ENCODE measurements at regions of chr5 and their contacts with region 1.

Region 1: GRCh38 chr5:79048437-79048836 is 21.0 kb downstream of the DMGDH start:
- DNase-seq: no peak
- H3K4me3 ChIP-seq: no peak overlapping the region
- H3K27ac ChIP-seq: peak overlapping the region in 1 of 2 experiments; percentile 51; a peak in 2 of 4 replicates
- H3K4me1 ChIP-seq: peaks cover 0 to 9% of the 10 kb centered on the region in 2 experiments; a peak in 2 of 4 replicates
- H3K27me3 ChIP-seq: no peaks in the 10 kb centered on the region; the same call in 1 of the 2 replicates
- CTCF ChIP-seq: no peak
- EP300 ChIP-seq: no peak
- RAD21 ChIP-seq: no peak

Region 2: DNA sequence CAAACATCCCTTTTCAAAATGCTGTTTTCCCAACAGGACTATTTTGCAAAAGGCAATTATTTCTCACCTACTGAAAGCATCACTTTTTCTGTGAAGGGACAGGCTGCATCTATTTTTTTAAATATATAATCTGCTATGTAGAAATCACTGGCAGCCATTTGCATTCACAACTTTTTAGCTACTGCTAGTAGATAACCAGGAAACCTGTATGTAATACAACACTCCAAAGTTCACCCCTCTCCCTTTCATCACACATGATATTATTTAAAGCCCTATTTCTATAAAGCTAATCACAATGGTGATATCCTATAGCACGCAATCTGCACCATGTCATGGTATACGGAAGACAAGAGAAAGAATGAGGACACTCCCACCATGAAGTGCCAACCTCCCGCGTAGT is 11.2 kb after region 1 on chr5:
- CTCF ChIA-PET with region 1: interaction called, 10 read pairs
- POLR2A ChIA-PET with region 1: no interaction called
- DNase-seq: no peak
- H3K4me3 ChIP-seq: no peak overlapping the region
- H3K27ac ChIP-seq: no peak overlapping the region
- H3K4me1 ChIP-seq: peaks cover 0 to 2% of the 10 kb centered on the region in 2 experiments; a peak in 1 of 4 replicates
- H3K27me3 ChIP-seq: no peaks in the 10 kb centered on the region; the same call in 1 of the 2 replicates
- CTCF ChIP-seq: no peak
- EP300 ChIP-seq: no peak
- RAD21 ChIP-seq: no peak